Activated naive CD4-positive, alpha-beta T cell treated with anti-CD3 and anti-CD28 coated beads for 36 hours (primary cell): ENCODE measurements at regions of chr1 and their contacts with region 1.

Region 1: DNA sequence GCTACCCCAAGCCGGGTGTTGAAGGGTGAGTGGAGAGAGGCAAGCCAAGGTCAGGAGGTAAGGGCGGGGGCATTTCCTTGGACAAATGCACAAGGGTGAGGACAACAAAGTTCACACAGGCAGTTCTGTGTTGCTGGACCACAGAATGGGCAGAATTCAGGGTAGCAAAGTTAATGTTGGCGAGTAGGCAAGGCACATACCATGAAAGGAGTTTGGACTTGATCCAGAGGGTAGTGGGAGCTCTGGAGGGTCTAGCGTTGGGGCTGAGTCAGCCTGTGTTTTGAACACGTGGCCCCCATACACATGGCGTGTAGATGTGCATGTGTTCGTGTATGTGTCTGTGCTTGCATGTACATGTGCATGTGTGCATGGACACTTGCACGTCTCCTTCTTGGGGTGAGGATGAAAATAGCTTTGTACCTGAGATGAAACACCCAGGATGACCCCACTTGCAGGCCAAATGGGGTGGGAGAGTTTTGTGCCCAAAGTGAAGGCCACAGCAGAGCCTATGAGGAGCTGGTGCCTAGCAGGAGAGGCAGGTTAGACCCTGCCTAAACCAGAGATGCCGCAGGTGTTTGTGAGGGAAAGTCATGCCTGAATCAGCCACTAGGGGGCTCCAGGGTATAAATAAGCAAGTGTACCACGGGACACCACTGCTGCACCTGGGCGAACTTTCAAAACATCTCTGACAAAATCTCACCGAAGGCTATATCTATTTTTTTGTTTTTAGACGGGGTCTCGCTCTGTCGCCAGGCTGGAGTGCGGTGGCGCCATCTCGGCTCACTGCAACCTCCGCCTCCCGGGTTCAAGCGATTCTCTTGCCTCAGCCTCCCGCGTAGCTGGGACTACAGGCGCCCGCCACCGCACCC is 21.8 kb downstream of the SLC27A3 start:
- DNase-seq: peak; percentile 95
- H3K4me3 Mint-ChIP-seq: no peak overlapping the region
- H3K27ac Mint-ChIP-seq: no peak overlapping the region
- H3K4me1 Mint-ChIP-seq: peaks cover 2% of the 10 kb centered on the region
- H3K27me3 Mint-ChIP-seq: no peaks in the 10 kb centered on the region

Region 2: GRCh38 chr1:153967082-153968000 is 170.3 kb after region 1 on chr1 and contains the start of gene CREB3L4:
- CTCF ChIA-PET with region 1: interaction called, 12 read pairs
- intact Hi-C with region 1: loop called (anchors 1 kb)
- DNase-seq: peak; percentile 90
- H3K4me3 Mint-ChIP-seq: peak within 1 kb of the TSS; percentile 85
- H3K27ac Mint-ChIP-seq: peak within 1 kb of the TSS; percentile 94
- H3K4me1 Mint-ChIP-seq: peaks cover 42% of the 10 kb centered on the region
- H3K27me3 Mint-ChIP-seq: no peaks in the 10 kb centered on the region
- total RNA-seq, gene CREB3L4: 5.6 to 7.4 TPM

Region 3: GRCh38 chr1:154129391-154129970 is 332.5 kb after region 1 on chr1:
- CTCF ChIA-PET with region 1: no interaction called
- intact Hi-C with region 1: no loop called
- DNase-seq: no peak
- H3K4me3 Mint-ChIP-seq: no peak overlapping the region
- H3K27ac Mint-ChIP-seq: no peak overlapping the region
- H3K4me1 Mint-ChIP-seq: peaks cover 12% of the 10 kb centered on the region
- H3K27me3 Mint-ChIP-seq: peaks cover 2% of the 10 kb centered on the region